ENCODE measurements at regions of chr3 and their contacts with region 1.

Region 1: DNA sequence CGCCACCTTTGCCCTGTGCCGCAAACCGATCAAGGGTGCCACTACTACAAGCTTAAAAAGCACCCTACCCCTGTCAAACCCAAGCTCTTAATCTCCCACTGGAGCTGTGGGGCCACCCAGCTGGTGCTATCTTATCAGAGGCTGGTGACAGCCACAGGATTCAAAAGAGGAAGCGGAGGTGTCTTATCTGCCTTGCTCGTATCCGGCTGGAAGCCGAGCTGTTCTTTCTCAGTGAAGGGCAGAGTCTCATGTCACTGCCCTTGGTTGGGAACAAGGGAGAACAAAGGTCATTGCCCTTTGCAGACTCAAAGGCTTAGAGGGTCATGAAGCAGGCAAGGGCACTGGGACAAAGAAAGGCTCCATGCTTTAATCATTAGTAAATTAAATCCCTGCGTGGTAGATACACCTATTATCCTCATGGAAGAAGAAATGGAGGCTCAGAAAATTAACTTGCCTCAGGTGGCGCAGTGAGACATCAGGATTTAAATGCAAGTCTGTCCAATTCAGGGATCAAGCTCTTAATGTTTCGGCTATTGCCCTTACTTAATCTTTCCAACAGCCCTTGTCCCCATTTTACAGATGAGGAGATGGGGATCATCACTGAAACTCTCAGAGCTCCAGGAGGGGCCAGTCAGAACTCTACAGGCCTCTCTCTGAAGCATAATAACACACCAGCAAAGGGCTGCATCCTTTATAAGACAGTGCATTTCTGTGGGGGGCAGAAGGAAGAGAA is 360.0 kb upstream of the PROK2 start:
- DNase-seq: no peak
- H3K4me3 ChIP-seq: no peak overlapping the region
- H3K27ac ChIP-seq: no peak overlapping the region
- H3K4me1 ChIP-seq: no peaks in the 10 kb centered on the region
- H3K27me3 ChIP-seq: no peaks in the 10 kb centered on the region
- CTCF ChIP-seq: no peak

Region 2: DNA sequence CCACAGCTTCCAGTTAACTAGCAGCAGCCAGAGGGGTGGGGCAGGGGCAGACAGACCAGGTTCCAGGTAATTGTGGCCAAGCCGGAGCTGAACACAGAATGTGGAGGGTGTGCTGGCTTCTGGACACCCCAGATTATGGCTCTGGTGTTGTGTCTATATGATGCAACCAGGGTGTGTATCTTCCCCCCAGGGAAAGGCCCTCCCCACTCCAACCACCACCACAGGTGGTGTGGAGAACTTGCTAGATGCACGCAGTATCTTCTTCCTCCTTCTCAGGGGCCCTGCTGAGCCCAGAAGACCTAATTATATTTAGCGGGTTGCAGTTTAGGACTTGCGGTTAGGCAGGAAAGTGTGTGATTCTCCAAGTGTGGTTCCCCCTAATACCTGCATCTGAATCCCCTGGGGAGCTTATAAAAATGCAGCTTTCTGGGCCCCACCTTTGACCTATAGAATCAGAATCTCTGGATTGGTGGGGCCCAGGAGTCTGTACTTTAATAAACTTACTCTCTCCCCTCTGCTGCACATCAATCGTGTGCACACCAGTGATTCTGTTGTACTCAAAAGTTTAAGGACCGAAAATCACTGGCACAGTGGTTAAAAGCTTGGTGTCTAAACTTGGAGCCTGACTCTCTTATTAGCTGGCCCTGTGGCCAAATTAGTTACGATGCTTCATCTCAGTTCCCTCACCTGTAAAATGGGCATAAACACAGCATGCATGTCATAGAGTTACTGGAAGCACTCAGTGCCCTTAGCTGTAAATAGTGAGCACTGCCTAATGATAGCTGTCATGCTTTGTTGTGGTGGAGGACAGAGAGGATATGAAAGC is 19.1 kb after region 1 on chr3:
- CTCF ChIA-PET with region 1: no interaction called
- dilution Hi-C with region 1: no loop called
- in situ Hi-C with region 1: no loop called
- intact Hi-C with region 1: no loop called
- DNase-seq: no peak
- H3K4me3 ChIP-seq: no peak overlapping the region
- H3K27ac ChIP-seq: no peak overlapping the region
- H3K4me1 ChIP-seq: no peaks in the 10 kb centered on the region
- H3K27me3 ChIP-seq: no peaks in the 10 kb centered on the region
- CTCF ChIP-seq: no peak

Region 3: GRCh38 chr3:72214066-72214951 is 69.4 kb after region 1 on chr3:
- CTCF ChIA-PET with region 1: no interaction called
- dilution Hi-C with region 1: loop called (anchors 5 kb)
- in situ Hi-C with region 1: no loop called
- intact Hi-C with region 1: no loop called
- DNase-seq: no peak
- H3K4me3 ChIP-seq: no peak overlapping the region
- H3K27ac ChIP-seq: no peak overlapping the region
- H3K4me1 ChIP-seq: no peaks in the 10 kb centered on the region
- H3K27me3 ChIP-seq: no peaks in the 10 kb centered on the region
- CTCF ChIP-seq: no peak